ENCODE measurements at regions of chr3 and their contacts with region 1.

Region 1: GRCh38 chr3:154496978-154497377 is 67.0 kb upstream of the GPR149 start:
- DNase-seq: no peak
- H3K4me3 ChIP-seq: no peak overlapping the region
- H3K27ac ChIP-seq: no peak overlapping the region
- H3K4me1 ChIP-seq: no peaks in the 10 kb centered on the region
- H3K27me3 ChIP-seq: no peaks in the 10 kb centered on the region
- CTCF ChIP-seq: no peak

Region 2: DNA sequence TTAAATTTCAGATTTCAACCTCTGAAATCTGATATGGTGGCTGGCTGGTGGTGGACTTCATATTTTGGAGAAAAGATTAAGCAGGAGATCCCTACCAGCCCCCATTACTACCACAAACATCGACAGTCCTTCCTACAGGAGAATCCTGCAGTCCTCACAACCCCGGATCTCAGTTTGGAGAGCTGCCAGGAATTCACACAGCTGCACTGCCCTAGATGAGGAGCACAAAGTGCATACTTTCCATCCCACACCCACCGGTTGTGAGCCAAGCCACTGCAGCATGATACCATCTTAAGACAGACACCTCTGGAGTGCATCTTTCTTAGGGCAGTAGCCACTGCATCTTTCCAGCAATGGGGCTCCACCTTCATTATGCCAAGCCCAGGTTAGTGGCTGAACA is 118.5 kb after region 1 on chr3:
- CTCF ChIA-PET with region 1: no interaction called
- POLR2A ChIA-PET with region 1: no interaction called
- intact Hi-C with region 1: loop called (anchors 10 kb)
- DNase-seq: no peak
- H3K4me3 ChIP-seq: no peak overlapping the region
- H3K27ac ChIP-seq: no peak overlapping the region
- H3K4me1 ChIP-seq: no peaks in the 10 kb centered on the region
- H3K27me3 ChIP-seq: no peaks in the 10 kb centered on the region
- CTCF ChIP-seq: no peak